ENCODE measurements at regions of chr5 and their contacts with region 1.

Region 1: DNA sequence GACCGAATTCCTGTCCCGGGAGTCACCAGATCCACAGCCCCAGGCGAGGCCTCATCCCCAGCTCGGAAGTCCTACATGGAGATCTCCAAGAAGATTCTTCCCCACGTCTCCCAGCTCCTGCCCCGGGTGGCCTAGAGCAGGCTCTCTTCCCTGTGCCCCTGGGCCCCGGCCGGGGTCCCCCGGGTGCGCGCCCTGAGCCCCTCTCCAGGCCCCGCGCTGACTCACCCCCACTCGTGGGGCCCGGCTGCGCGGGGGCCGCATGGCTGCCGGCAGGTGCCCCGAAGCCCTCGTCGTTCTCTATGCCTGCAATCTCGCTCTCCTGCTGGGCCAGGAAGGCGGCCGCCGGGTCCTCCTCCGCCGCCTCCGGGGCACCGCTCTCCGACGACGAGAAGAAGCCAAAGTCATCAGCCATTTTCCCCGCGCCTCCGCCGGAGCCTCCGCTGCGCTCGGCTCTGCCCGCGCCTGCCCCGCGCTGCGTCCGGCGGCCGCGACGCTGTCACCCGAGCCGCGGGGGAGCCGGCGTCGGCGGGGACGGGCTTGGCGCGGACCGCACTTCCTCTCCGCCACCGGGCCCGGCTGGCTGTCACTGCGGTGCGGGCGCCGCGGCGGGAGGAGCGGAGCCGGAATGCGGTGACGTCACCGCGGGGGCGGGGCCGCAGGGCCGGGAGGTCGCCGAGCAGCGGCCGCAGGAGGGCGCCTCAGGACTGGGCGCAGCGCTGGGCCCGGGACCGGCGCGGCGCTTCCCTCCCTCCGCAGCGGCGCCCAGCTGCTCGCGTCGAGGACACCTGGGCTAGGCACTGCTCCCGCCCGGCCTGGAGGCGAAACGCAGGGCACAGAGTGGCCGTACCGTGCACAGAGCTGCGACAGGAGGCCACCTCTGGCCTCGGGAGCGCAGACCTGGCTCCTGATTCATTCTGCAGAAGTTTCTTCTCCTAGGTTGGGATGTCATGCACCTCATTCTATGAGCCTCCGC is at the start of gene CLTB:
- DNase-seq: peak; percentile 82
- H3K4me3 ChIP-seq: peak within 1 kb of the TSS; percentile 58 to 84 (median 80)
- H3K27ac ChIP-seq: peak within 1 kb of the TSS; percentile 72
- H3K4me1 ChIP-seq: peaks cover 60% of the 10 kb centered on the region
- H3K27me3 ChIP-seq: no peaks in the 10 kb centered on the region
- CTCF ChIP-seq: peak; percentile 26 to 55
- total RNA-seq, gene CLTB: 166 to 323 TPM

Region 2: DNA sequence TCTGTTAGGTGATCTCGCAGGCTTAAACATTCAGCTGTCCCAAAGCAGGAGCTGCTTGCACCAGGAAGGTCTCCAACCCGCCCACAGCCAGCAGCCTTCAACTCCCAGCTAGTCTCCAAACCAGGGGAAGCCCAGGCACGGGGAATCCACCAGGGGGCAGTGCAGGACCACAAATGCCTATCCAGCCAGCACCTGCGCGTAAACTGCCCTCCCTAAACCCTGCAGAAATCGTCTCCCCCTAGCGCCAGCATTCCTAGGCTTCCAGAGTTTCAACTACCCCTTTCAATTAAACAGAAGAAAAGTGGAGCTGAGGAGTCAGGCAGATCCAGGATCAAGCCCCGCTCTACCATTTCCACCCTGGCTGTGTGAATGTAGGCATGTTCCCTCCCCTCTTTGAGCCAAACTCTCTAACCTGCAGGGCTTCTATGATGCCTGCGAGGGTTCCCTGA is 686.4 kb before region 1 on chr5:
- CTCF ChIA-PET with region 1: no interaction called
- dilution Hi-C with region 1: no loop called
- in situ Hi-C with region 1: no loop called
- intact Hi-C with region 1: loop called (anchors 10 kb)
- DNase-seq: peak; percentile 74
- H3K4me3 ChIP-seq: no peak overlapping the region
- H3K27ac ChIP-seq: no peak overlapping the region
- H3K4me1 ChIP-seq: no peaks in the 10 kb centered on the region
- H3K27me3 ChIP-seq: no peaks in the 10 kb centered on the region
- CTCF ChIP-seq: peak; percentile 94 to 97

Region 3: DNA sequence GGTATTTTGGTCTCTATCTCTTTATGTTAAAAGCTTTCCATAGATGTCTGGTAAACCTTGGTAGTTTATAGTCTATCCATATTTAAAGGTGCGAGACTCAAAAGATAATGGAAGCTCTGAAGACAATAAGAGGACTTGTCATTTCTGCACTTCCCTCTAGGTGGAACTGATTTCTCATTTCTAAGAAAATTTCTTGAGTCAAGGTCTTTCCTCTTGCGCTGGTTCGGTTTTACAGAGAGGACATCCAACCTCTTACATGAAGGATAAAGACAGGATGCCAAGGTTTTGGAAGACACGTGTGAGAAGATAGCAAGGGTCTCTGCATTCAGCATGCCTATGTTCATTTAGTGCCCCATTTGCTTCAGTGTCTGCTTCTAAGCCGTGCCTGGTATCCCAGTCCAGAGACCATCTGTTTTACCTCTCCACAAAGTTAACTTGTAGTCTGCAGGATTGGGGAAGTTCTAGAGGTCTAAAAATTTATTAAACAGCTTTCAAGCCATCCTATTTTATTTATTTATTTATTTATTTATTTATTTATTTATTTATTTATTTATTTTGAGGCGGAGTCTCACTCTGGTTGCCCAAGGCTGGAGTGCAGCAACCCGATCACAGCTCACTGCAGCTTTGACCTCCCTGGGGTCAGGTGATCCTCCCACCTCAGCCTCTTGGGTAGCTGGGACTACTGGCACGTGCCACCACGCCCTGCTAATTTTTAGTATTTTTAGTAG is 96.2 kb before region 1 on chr5:
- CTCF ChIA-PET with region 1: no interaction called
- dilution Hi-C with region 1: no loop called
- in situ Hi-C with region 1: no loop called
- intact Hi-C with region 1: no loop called
- DNase-seq: no peak
- H3K4me3 ChIP-seq: no peak overlapping the region
- H3K27ac ChIP-seq: no peak overlapping the region
- H3K4me1 ChIP-seq: no peaks in the 10 kb centered on the region
- H3K27me3 ChIP-seq: no peaks in the 10 kb centered on the region
- CTCF ChIP-seq: peak; percentile 18 to 27

Region 4: DNA sequence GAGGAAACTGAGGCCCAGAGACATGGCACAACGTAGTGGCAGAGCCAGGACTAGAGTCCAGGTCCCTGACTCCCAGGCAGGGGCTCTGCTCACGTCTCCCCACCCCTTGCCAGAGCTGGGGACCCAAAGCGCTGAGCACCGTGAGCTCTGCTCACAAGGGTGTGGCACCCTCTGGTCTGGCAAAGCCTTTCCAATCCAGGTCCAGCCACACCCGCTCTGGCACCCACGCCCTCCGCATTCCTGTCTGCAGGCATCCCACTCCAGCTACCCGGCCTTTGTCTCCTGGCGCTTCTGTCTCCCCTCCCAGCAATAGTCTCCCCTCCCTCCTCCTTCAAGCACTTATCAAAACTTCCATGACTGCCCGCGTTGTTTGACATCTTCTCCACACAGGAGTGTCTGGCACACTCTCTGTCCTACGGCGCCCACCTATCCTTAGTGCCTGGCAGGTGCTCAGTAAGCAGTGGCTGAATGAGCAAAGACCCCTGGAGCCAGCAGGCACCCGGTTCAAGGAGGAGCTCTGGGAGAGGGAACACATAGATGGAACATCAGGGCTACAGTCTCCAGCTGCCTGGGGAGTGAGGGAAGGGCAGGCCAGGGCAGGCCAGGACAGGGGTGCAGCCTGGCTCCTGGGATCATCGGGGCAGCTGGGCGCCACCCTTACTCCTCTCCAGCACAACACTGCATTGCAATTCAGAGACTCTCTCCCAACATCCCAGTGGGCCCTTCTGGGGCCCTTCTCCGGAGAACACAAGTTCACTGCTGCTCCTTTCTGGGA is 15.7 kb before region 1 on chr5:
- CTCF ChIA-PET with region 1: interaction called, 17 read pairs
- dilution Hi-C with region 1: no loop called
- in situ Hi-C with region 1: no loop called
- intact Hi-C with region 1: no loop called
- DNase-seq: no peak
- H3K4me3 ChIP-seq: no peak overlapping the region
- H3K27ac ChIP-seq: peak overlapping the region; percentile 35
- H3K4me1 ChIP-seq: peaks cover 23% of the 10 kb centered on the region
- H3K27me3 ChIP-seq: no peaks in the 10 kb centered on the region
- CTCF ChIP-seq: no peak

Region 5: GRCh38 chr5:176492431-176492830 is 76.2 kb after region 1 on chr5:
- CTCF ChIA-PET with region 1: no interaction called
- dilution Hi-C with region 1: no loop called
- in situ Hi-C with region 1: no loop called
- intact Hi-C with region 1: loop called (anchors 2 kb)
- DNase-seq: peak; percentile 88
- H3K4me3 ChIP-seq: no peak overlapping the region
- H3K27ac ChIP-seq: peak overlapping the region; percentile 18
- H3K4me1 ChIP-seq: peaks cover 26% of the 10 kb centered on the region
- H3K27me3 ChIP-seq: no peaks in the 10 kb centered on the region
- CTCF ChIP-seq: no peak

Region 6: DNA sequence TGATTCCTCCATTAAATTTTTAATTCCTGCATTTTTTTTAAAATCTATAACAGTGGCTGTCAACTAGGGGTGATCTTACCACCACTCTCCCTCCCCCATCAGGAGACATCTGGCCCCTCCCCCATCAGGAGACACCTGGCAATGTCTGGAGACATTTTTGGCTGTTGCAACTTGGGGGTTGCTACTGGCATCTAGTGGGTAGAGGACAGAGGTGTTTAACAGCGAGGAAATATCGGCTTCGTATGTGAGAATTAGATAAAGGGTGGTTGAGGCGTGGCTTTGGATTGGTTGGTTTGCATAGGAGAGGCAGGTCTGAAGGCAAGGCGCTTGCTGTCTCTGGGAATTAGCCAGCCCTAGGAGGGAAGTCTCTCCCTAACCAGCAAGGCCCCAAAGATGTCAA is 143.4 kb after region 1 on chr5:
- CTCF ChIA-PET with region 1: no interaction called
- dilution Hi-C with region 1: no loop called
- in situ Hi-C with region 1: no loop called
- intact Hi-C with region 1: loop called (anchors 1 kb)
- DNase-seq: peak; percentile 30
- H3K4me3 ChIP-seq: no peak overlapping the region
- H3K27ac ChIP-seq: no peak overlapping the region
- H3K4me1 ChIP-seq: no peaks in the 10 kb centered on the region
- H3K27me3 ChIP-seq: no peaks in the 10 kb centered on the region
- CTCF ChIP-seq: peak in 1 of 2 donors; percentile 38

Region 7: GRCh38 chr5:176619203-176619568 is 202.9 kb after region 1 on chr5:
- CTCF ChIA-PET with region 1: no interaction called
- dilution Hi-C with region 1: no loop called
- in situ Hi-C with region 1: no loop called
- intact Hi-C with region 1: loop called (anchors 2 kb)
- DNase-seq: peak; percentile 71
- H3K4me3 ChIP-seq: no peak overlapping the region
- H3K27ac ChIP-seq: no peak overlapping the region
- H3K4me1 ChIP-seq: peaks cover 20% of the 10 kb centered on the region
- H3K27me3 ChIP-seq: peaks cover 15% of the 10 kb centered on the region
- CTCF ChIP-seq: peak in 1 of 2 donors; percentile 25

Measured in mammary epithelial cell (primary cell).